ENCODE measurements at regions of chrX and their contacts with region 1.

Region 1: GRCh38 chrX:56729152-56729850 is at the start of gene NBDY:
- H3K4me3 ChIP-seq: peak within 1 kb of the TSS; percentile 82
- H3K27ac ChIP-seq: peak within 1 kb of the TSS; percentile 58
- H3K4me1 ChIP-seq: no peaks in the 10 kb centered on the region
- CTCF ChIP-seq: no peak

Region 2: GRCh38 chrX:56281789-56282188 is 447.5 kb before region 1 on chrX:
- CTCF ChIA-PET with region 1: interaction called, 31 read pairs
- POLR2A ChIA-PET with region 1: no interaction called
- H3K4me3 ChIP-seq: no peak overlapping the region
- H3K27ac ChIP-seq: no peak overlapping the region
- H3K4me1 ChIP-seq: no peaks in the 10 kb centered on the region
- CTCF ChIP-seq: no peak

Region 3: DNA sequence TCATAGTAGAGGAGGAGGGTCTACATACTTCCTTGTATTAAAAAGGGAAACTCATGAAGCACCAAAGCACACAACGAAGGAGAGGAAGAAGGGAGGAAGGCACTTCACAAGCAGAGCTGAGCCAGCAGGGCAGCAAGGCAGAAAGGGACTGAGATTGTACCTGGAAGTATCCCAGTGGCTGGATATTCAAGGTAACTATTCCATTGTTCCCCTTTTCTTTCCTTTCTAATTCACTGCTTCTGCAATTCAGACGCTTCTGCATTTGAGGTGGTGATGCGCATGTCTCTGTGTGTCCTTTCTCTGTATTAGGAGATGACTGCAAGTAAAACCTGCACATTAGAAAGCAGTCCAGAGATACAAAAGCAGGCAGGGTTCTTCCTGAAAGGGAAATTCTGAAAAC is 111.0 kb before region 1 on chrX:
- CTCF ChIA-PET with region 1: no interaction called
- POLR2A ChIA-PET with region 1: no interaction called
- H3K4me3 ChIP-seq: no peak overlapping the region
- H3K27ac ChIP-seq: no peak overlapping the region
- H3K4me1 ChIP-seq: no peaks in the 10 kb centered on the region
- CTCF ChIP-seq: no peak

Region 4: GRCh38 chrX:56744996-56745395 is 15.7 kb after region 1 on chrX:
- CTCF ChIA-PET with region 1: interaction called, 10 read pairs
- POLR2A ChIA-PET with region 1: no interaction called
- H3K4me3 ChIP-seq: no peak overlapping the region
- H3K27ac ChIP-seq: no peak overlapping the region
- H3K4me1 ChIP-seq: no peaks in the 10 kb centered on the region
- CTCF ChIP-seq: no peak

Measured in HEK293 (cell line).